ENCODE measurements at regions of chr10 and their contacts with region 1.

Region 1: GRCh38 chr10:72625608-72626443 is at the start of gene MICU1:
- DNase-seq: peak; percentile 96
- H3K4me3 Mint-ChIP-seq: peak within 1 kb of the TSS; percentile 99
- H3K27ac Mint-ChIP-seq: peak within 1 kb of the TSS; percentile 79
- H3K4me1 Mint-ChIP-seq: peaks cover 24% of the 10 kb centered on the region
- H3K27me3 Mint-ChIP-seq: no peaks in the 10 kb centered on the region
- total RNA-seq, gene MICU1: 29.6 to 36.1 TPM

Region 2: DNA sequence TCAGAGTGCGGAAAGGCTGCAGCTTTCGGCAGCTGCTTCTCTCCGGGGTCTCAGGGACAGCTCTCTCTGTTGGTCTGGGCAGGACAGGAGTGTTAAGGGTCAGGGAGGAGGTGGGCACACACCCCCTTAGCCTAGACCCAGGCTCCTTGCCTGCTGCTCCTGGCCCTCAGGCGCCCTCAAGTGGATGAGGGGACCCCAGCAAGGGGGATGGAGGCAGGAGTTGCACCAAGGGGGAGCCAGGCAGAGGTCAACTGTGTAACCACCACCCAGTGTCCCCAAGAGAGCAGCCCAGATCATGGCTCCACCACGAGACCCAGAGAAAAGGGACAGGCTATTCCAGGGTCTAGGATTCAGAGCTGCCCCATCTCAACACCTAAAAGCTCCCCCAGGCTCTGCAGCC is 564.3 kb before region 1 on chr10:
- CTCF ChIA-PET with region 1: no interaction called
- POLR2A ChIA-PET with region 1: no interaction called
- DNase-seq: no peak
- H3K4me3 Mint-ChIP-seq: no peak overlapping the region
- H3K27ac Mint-ChIP-seq: no peak overlapping the region
- H3K4me1 Mint-ChIP-seq: no peaks in the 10 kb centered on the region
- H3K27me3 Mint-ChIP-seq: no peaks in the 10 kb centered on the region

Region 3: GRCh38 chr10:72682626-72683025 is 56.8 kb after region 1 on chr10:
- CTCF ChIA-PET with region 1: no interaction called
- POLR2A ChIA-PET with region 1: interaction called, 12 read pairs
- DNase-seq: no peak
- H3K4me3 Mint-ChIP-seq: no peak overlapping the region
- H3K27ac Mint-ChIP-seq: no peak overlapping the region
- H3K4me1 Mint-ChIP-seq: peaks cover 5% of the 10 kb centered on the region
- H3K27me3 Mint-ChIP-seq: peaks cover 14% of the 10 kb centered on the region

Region 4: DNA sequence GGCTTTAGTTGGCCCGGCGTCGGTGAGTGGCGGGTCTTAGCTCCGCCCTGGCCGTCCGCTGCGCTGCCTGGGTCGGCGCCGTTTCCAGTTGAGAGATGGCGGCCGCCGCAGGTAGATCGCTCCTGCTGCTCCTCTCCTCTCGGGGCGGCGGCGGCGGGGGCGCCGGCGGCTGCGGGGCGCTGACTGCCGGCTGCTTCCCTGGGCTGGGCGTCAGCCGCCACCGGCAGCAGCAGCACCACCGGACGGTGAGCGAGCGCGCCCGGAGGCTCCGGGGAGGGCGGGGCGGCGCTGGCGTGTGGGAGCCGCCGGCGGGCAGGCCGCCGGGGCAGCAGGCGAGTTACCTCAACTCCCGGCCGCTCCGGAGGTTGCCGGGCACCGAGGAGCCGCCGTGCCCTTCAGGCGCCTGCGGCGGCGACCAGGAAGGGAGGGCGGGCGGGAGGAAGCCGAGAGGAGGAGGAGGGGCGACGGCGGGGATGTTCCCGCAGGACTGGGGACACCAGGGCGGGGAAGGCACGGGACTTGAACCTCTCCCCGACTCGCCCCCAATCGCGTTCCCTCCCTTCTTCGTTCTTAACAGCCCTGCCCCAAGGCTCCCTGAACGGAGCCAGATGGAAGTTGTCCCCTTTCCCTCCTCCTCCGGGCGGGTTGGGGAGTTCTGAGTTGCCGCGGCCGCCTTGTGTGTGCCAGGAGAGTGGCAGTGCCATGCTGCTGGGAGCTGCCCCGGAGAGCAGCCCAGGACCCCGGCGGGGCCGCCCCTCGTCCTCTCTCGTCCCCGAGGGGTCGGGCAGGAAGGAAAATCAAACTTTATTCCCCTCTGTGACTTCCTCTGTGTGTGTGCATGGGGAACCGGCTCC is 66.5 kb after region 1 on chr10 and contains the start of gene MCU:
- CTCF ChIA-PET with region 1: no interaction called
- POLR2A ChIA-PET with region 1: interaction called, 14 read pairs
- DNase-seq: peak; percentile 93
- H3K4me3 Mint-ChIP-seq: peak within 1 kb of the TSS; percentile 84
- H3K27ac Mint-ChIP-seq: peak within 1 kb of the TSS; percentile 58
- H3K4me1 Mint-ChIP-seq: peaks cover 31% of the 10 kb centered on the region
- H3K27me3 Mint-ChIP-seq: peaks cover 1% of the 10 kb centered on the region
- total RNA-seq, gene MCU: 14.5 to 16.1 TPM

Measured in activated CD4-positive, alpha-beta memory T cell treated with anti-CD3 and anti-CD28 coated beads, Interleukin-2, amount 10 ng/mL, durations not matched to agents 7 days and 5 days (primary cell).